OCI-LY7 (cell line): ENCODE measurements at regions of chr12 and their contacts with region 1.

Region 1: GRCh38 chr12:20142956-20143355 is 225.4 kb upstream of the PDE3A start:
- DNase-seq: peak; percentile 4
- H3K4me3 ChIP-seq: no peak overlapping the region
- H3K27ac ChIP-seq: no peak overlapping the region
- H3K4me1 ChIP-seq: peaks cover 25% of the 10 kb centered on the region
- CTCF ChIP-seq: 0 out of 2 replicates have a peak, but pooled peaks have one; percentile 32

Region 2: GRCh38 chr12:19439059-19440018 is 703.6 kb before region 1 on chr12 and contains the start of gene AEBP2:
- CTCF ChIA-PET with region 1: no interaction called
- POLR2A ChIA-PET with region 1: no interaction called
- intact Hi-C with region 1: loop called (anchors 10 kb)
- DNase-seq: peak; percentile 91
- H3K4me3 ChIP-seq: peak within 1 kb of the TSS; percentile 99
- H3K27ac ChIP-seq: peak within 1 kb of the TSS; percentile 74
- H3K4me1 ChIP-seq: peaks cover 32% of the 10 kb centered on the region
- CTCF ChIP-seq: no peak
- total RNA-seq, gene AEBP2: 20.9 and 21.5 TPM in 2 replicates

Region 3: GRCh38 chr12:20097626-20098025 is 45.3 kb before region 1 on chr12:
- CTCF ChIA-PET with region 1: no interaction called
- POLR2A ChIA-PET with region 1: no interaction called
- intact Hi-C with region 1: no loop called
- DNase-seq: no peak
- H3K4me3 ChIP-seq: no peak overlapping the region
- H3K27ac ChIP-seq: no peak overlapping the region
- H3K4me1 ChIP-seq: no peaks in the 10 kb centered on the region
- CTCF ChIP-seq: no peak

Region 4: DNA sequence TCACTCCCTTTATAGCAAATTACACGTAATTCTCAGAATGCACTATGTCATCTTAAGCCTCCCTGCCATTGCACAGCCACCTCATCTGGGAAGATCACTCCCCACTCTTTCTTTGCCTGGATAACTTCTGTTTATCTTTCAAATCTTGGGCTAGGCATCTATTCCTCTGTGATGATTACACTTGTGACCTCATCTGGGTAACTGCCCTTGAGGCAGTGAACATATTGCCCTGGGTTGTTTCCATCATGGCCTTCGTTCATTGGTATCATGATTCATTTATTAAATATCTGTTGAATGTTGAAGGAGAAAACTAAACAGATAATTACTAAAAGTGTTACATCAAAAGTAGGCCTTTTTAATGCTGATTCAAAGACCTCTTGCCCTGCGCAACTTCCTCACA is 199.2 kb after region 1 on chr12:
- CTCF ChIA-PET with region 1: no interaction called
- POLR2A ChIA-PET with region 1: no interaction called
- intact Hi-C with region 1: no loop called
- DNase-seq: no peak
- H3K4me3 ChIP-seq: no peak overlapping the region
- H3K27ac ChIP-seq: no peak overlapping the region
- H3K4me1 ChIP-seq: no peaks in the 10 kb centered on the region
- CTCF ChIP-seq: no peak